Activated CD8-positive, alpha-beta T cell treated with anti-CD3 and anti-CD28 coated beads for 36 hours (primary cell): ENCODE measurements at regions of chr9 and their contacts with region 1.

Region 1: DNA sequence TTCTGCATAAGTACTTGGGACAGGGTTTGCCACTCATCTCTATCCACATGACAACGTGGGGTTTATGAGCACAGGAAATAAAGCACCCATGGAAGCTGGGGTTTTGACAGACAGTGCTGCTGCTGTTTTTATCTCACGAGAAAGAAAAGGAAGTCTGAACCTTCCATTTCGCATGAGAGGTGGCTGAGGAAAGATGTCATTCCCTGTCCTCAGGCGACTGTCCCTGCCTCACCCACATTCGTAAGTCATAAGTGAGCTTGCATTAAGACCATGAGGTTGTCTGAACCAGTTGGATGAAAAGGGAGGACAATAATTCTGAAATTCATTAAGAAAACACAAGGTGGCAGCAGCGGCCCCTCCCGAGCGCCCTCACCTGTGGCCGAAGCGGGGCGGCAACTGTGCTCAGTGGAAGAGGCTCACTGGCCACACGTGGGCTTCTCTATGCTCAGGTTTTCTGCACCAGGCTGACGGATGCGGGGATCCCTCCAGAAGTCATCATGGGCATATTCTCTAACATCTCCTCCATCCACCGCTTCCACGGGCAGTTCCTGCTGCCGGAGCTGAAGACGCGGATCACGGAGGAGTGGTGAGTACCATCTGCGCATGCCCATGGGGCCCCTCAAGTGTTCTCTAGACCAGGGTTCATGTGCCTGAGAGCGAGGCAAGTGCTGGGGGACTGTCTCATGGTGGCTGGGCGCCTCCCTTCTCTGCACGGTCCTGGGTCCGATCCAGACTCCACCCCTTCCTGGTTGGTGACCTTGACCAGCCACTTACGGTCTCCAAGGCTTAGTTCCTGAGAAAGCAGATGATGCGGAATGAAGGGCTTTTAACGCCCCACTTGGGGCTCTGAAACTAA is 54.7 kb upstream of the SUSD3 start:
- DNase-seq: peak; percentile 79
- ATAC-seq: peak; percentile 93
- H3K4me3 Mint-ChIP-seq: no peak overlapping the region
- H3K27ac Mint-ChIP-seq: peak overlapping the region; percentile 92
- H3K4me1 Mint-ChIP-seq: peaks cover 49% of the 10 kb centered on the region
- H3K27me3 Mint-ChIP-seq: no peaks in the 10 kb centered on the region
- CTCF ChIP-seq: peak; percentile 88

Region 2: GRCh38 chr9:92860867-92861266 is 142.9 kb before region 1 on chr9:
- CTCF ChIA-PET with region 1: no interaction called
- POLR2A ChIA-PET with region 1: no interaction called
- intact Hi-C with region 1: no loop called
- DNase-seq: no peak
- ATAC-seq: no peak
- H3K4me3 Mint-ChIP-seq: no peak overlapping the region
- H3K27ac Mint-ChIP-seq: no peak overlapping the region
- H3K4me1 Mint-ChIP-seq: peaks cover 36% of the 10 kb centered on the region
- H3K27me3 Mint-ChIP-seq: no peaks in the 10 kb centered on the region
- CTCF ChIP-seq: no peak

Region 3: DNA sequence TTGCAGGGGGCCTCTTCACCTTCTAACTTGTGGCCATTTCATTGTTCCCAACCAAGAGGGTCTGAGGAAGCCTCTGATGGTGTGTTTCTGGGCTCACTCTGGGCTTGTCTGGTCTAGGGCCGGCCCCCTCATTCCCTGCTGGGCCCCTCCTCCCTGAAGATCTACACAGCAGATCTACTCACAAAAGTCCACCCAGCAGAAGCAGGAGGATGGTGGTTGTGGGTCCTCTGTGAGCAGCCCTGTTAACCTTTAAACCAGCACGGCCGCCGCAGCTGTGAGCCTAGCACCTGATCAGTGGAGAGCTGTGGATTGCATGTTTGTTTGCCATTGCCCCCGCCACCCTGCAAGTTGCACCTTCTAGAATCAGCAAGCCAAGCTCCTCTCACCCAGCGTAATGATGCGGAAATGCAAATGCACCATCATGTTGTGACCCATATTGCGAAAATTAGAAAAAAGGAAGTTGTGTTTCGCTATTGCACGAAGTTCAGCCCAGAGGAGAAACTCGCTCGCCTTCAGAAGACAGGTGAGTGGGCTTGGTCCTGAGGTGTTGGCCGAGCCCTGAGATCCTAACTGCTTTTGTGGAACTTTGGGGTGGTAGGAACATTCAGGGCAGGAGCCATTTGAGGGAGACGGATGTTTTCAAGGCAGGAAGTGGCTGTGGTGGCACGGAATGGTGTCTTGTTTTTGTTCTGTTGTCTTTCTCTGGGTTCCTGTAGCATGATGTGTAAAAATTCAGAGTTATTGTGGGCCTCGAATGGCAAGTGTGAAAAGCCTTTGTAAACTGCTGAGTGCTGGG is 39.8 kb before region 1 on chr9:
- CTCF ChIA-PET with region 1: interaction called, 19 read pairs
- POLR2A ChIA-PET with region 1: interaction called, 9 read pairs
- intact Hi-C with region 1: loop called (anchors 5 kb)
- DNase-seq: peak; percentile 90
- ATAC-seq: peak; percentile 64
- H3K4me3 Mint-ChIP-seq: peak overlapping the region; percentile 98
- H3K27ac Mint-ChIP-seq: peak overlapping the region; percentile 100
- H3K4me1 Mint-ChIP-seq: peaks cover 55% of the 10 kb centered on the region
- H3K27me3 Mint-ChIP-seq: no peaks in the 10 kb centered on the region
- CTCF ChIP-seq: no peak

Region 4: GRCh38 chr9:92983984-92984589 is 19.7 kb before region 1 on chr9:
- CTCF ChIA-PET with region 1: interaction called, 16 read pairs
- POLR2A ChIA-PET with region 1: interaction called, 4 read pairs
- intact Hi-C with region 1: no loop called
- DNase-seq: peak; percentile 74
- ATAC-seq: no peak
- H3K4me3 Mint-ChIP-seq: no peak overlapping the region
- H3K27ac Mint-ChIP-seq: peak overlapping the region; percentile 34
- H3K4me1 Mint-ChIP-seq: peaks cover 71% of the 10 kb centered on the region
- H3K27me3 Mint-ChIP-seq: no peaks in the 10 kb centered on the region
- CTCF ChIP-seq: no peak

Region 5: GRCh38 chr9:93013856-93014582 is 10.2 kb after region 1 on chr9:
- CTCF ChIA-PET with region 1: interaction called, 75 read pairs
- POLR2A ChIA-PET with region 1: interaction called, 3 read pairs
- intact Hi-C with region 1: no loop called
- DNase-seq: no peak
- ATAC-seq: no peak
- H3K4me3 Mint-ChIP-seq: no peak overlapping the region
- H3K27ac Mint-ChIP-seq: no peak overlapping the region
- H3K4me1 Mint-ChIP-seq: peaks cover 6% of the 10 kb centered on the region
- H3K27me3 Mint-ChIP-seq: no peaks in the 10 kb centered on the region
- CTCF ChIP-seq: no peak

Region 6: GRCh38 chr9:93028448-93029006 is 24.7 kb after region 1 on chr9:
- CTCF ChIA-PET with region 1: interaction called, 28 read pairs
- POLR2A ChIA-PET with region 1: interaction called, 3 read pairs
- intact Hi-C with region 1: no loop called
- DNase-seq: peak; percentile 81
- ATAC-seq: peak; percentile 83
- H3K4me3 Mint-ChIP-seq: peak overlapping the region; percentile 52
- H3K27ac Mint-ChIP-seq: peak overlapping the region; percentile 96
- H3K4me1 Mint-ChIP-seq: peaks cover 71% of the 10 kb centered on the region
- H3K27me3 Mint-ChIP-seq: no peaks in the 10 kb centered on the region
- CTCF ChIP-seq: no peak

Region 7: DNA sequence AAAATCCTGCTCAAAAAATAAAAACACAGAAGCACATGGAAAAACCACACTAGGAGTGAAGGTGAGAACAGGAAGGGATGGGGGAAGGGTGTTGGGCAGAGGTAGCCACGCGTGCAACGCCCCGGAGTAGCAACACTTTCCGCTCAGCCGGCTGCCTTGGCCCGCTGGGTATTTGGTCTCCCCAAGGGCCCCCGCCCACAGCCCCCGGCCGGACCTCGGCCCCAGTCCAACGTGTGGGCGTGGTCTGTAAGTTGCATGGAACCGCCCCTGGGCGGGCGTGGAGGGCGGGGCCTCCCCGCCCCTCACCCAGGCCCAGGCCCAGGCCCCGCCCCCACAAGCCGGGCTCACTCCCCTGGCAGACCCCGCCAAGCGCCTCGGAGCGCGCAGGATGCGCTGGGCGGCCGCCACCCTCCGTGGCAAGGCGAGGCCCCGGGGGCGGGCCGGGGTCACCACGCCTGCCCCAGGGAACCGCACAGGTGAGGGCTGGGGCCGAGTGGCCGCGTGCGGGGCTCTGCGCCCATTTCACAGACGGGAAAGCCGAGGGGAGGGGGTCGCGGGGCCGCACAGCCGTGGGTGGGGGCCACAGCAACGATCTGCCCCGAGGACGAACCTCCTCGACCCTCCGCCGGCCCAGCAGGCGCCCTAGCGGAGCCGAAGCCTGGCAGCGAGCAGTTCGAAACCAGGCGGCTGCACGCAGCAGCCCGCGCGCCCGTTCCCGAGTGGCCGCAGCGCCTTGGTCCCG is 54.7 kb after region 1 on chr9 and contains the start of gene SUSD3:
- CTCF ChIA-PET with region 1: interaction called, 12 read pairs
- POLR2A ChIA-PET with region 1: no interaction called
- intact Hi-C with region 1: no loop called
- DNase-seq: peak; percentile 76
- ATAC-seq: peak; percentile 63
- H3K4me3 Mint-ChIP-seq: peak within 1 kb of the TSS; percentile 86
- H3K27ac Mint-ChIP-seq: peak within 1 kb of the TSS; percentile 97
- H3K4me1 Mint-ChIP-seq: peaks cover 51% of the 10 kb centered on the region
- H3K27me3 Mint-ChIP-seq: no peaks in the 10 kb centered on the region
- CTCF ChIP-seq: no peak
- total RNA-seq, gene SUSD3: 34.6 to 36.7 TPM